CD4-positive, alpha-beta T cell (primary cell): ENCODE measurements at regions of chr3 and their contacts with region 1.

Region 1: GRCh38 chr3:28521663-28522062 is 173.0 kb upstream of the AZI2 start:
- DNase-seq: no peak
- ATAC-seq: no peak
- H3K4me3 ChIP-seq: no peak overlapping the region
- H3K4me3 Mint-ChIP-seq: no peak overlapping the region
- H3K27ac ChIP-seq: no peak overlapping the region
- H3K27ac Mint-ChIP-seq: no peak overlapping the region
- H3K4me1 ChIP-seq: no peaks in the 10 kb centered on the region
- H3K4me1 Mint-ChIP-seq: no peaks in the 10 kb centered on the region
- H3K27me3 ChIP-seq: no peaks in the 10 kb centered on the region
- H3K27me3 Mint-ChIP-seq: no peaks in the 10 kb centered on the region
- CTCF ChIP-seq: no peak

Region 2: DNA sequence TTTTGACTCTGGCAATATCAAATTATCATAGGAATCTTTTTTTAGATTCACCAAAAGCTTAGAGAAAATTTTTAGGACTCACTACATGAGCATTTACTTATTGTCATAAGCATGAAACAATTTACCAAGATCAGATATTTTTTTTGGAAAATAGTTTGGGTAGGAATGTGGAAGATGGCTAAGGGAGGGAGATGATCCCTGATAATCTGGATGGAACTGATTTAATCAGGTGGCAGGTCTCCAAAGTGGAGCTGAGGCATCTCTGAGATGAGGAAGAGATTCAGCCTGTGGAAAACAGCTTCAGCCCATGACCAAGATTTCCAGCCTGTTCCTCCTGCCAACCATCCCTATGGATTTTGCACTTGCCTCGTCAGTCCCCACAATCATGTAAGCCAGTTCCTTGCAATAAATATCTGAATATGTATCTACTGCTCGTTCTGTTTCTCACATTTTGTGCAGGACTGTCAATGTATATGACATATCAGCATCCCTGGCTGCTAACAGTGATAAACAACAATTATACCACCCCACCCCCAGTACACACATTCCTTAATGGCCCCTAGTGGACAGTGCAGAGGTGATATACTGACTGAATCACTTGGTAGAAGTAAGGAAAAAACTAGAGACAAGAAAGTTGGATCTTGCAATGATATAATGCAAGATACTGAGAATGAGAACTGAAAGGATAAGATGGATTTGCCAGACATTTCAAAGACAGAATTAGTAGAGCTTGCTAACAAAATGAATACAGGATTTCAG is 1336.3 kb before region 1 on chr3:
- CTCF ChIA-PET with region 1: no interaction called
- POLR2A ChIA-PET with region 1: no interaction called
- intact Hi-C with region 1: loop called in 1 of 2 experiments (anchors 5 kb)
- DNase-seq: no peak
- ATAC-seq: no peak
- H3K4me3 ChIP-seq: no peak overlapping the region
- H3K4me3 Mint-ChIP-seq: no peak overlapping the region
- H3K27ac ChIP-seq: no peak overlapping the region
- H3K27ac Mint-ChIP-seq: no peak overlapping the region
- H3K4me1 ChIP-seq: no peaks in the 10 kb centered on the region
- H3K4me1 Mint-ChIP-seq: no peaks in the 10 kb centered on the region
- H3K27me3 ChIP-seq: no peaks in the 10 kb centered on the region
- H3K27me3 Mint-ChIP-seq: no peaks in the 10 kb centered on the region
- CTCF ChIP-seq: no peak